PC-3 (cell line): ENCODE measurements at regions of chr3 and their contacts with region 1.

Region 1: DNA sequence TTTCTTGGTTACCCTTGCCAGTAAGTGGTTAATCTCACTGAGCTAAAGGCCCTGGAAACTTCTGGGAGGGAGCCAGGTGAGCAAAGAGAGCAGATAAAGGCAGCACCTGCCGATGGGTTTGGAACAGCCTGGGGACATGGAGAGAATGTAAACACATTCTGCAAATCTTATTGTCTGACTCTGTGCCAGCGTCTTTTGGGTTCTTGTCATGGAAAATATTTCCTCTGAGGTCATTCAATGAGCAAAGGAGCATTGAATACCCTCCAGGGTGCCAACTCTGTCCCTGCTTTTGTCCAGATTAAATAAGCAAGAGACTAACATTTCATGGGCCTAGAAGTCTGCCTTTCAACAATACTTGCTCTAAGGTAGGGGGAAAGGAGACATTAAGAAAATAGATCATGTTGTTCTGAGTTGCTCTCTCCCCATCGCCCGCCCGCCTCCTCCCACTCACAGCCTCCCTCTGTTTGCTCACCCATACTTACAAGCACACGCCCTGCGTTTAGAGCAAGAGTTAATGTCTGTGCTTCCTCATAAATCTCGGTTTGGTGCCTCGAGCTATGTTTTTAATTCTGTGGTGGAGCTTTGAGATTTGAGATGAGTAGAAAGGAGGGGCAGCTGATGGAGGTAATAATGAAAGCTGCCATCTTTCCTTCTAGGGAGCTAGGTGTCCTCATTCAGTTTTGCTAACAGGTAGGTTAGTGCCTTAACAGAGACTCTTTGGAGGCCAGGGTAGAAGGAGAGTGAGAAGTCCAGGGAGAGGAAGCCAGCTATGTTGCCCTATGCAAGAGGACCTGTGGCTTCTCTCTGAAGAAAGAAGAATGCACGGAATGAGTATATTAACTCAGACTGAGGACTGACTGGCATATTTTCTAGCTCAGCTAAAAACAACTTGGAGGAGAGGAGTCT is 132.9 kb downstream of the TPRG1 start:
- DNase-seq: peak; percentile 99
- ATAC-seq: peak; percentile 83
- H3K4me3 ChIP-seq: peak overlapping the region; percentile 48; the same call in 1 of the 2 replicates
- H3K27ac ChIP-seq: peak overlapping the region; percentile 94
- H3K4me1 ChIP-seq: peaks cover 40% of the 10 kb centered on the region
- H3K27me3 ChIP-seq: no peaks in the 10 kb centered on the region
- CTCF ChIP-seq: no peak

Region 2: GRCh38 chr3:189276481-189277219 is 28.0 kb before region 1 on chr3:
- CTCF ChIA-PET with region 1: interaction called, 4 read pairs
- POLR2A ChIA-PET with region 1: interaction called, 5 read pairs
- intact Hi-C with region 1: loop called (anchors 2 kb)
- DNase-seq: peak; percentile 78
- ATAC-seq: peak; percentile 66
- H3K4me3 ChIP-seq: peak overlapping the region; percentile 22; the same call in 1 of the 2 replicates
- H3K27ac ChIP-seq: peak overlapping the region; percentile 78
- H3K4me1 ChIP-seq: peaks cover 50% of the 10 kb centered on the region
- H3K27me3 ChIP-seq: no peaks in the 10 kb centered on the region
- CTCF ChIP-seq: no peak

Region 3: GRCh38 chr3:189316242-189317019 is 11.7 kb after region 1 on chr3:
- CTCF ChIA-PET with region 1: no interaction called
- POLR2A ChIA-PET with region 1: interaction called, 3 read pairs
- intact Hi-C with region 1: loop called (anchors 1 kb)
- DNase-seq: peak; percentile 98
- ATAC-seq: peak; percentile 99
- H3K4me3 ChIP-seq: peak overlapping the region; percentile 8; the same call in 1 of the 2 replicates
- H3K27ac ChIP-seq: peak overlapping the region; percentile 82
- H3K4me1 ChIP-seq: peaks cover 32% of the 10 kb centered on the region
- H3K27me3 ChIP-seq: no peaks in the 10 kb centered on the region
- CTCF ChIP-seq: no peak

Region 4: DNA sequence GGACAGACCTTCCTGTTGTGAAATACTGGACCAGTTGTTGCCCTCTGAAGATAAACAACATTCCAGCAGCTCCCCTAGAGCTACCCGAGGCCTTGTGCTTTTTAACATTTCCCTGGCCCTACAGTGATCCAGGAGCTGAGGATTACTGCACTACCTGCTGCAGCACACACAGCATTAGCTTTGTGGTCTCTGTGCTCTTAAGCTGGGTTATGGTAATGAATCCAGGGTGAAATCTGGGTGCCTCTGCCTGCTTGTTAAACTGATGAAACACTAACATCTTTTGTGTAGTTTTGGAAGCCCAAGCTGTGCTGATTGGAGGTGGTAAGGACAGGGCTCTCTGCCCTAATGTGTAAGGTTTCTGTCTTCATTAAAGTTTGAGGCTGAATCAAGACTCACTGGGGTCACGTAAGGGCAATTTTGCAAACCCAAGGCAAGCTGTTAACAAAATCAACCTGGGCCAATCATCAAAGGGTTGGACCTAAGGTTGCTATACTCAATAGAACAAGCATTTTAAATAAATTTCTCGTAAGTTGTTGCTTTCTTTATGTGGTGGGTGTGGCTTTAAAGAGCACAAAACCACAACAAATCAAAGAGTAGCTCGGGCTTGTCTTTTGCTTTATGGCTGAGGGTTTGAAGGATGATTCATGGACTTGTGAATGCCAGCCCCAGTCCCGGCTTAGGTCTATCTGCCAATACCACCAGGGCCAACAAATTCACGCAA is 50.9 kb after region 1 on chr3:
- CTCF ChIA-PET with region 1: interaction called, 4 read pairs
- POLR2A ChIA-PET with region 1: no interaction called
- intact Hi-C with region 1: loop called (anchors 1 kb)
- DNase-seq: peak; percentile 84
- ATAC-seq: peak; percentile 72
- H3K4me3 ChIP-seq: peak overlapping the region; percentile 19; the same call in 1 of the 2 replicates
- H3K27ac ChIP-seq: peak overlapping the region; percentile 92
- H3K4me1 ChIP-seq: peaks cover 38% of the 10 kb centered on the region
- H3K27me3 ChIP-seq: no peaks in the 10 kb centered on the region
- CTCF ChIP-seq: no peak